ENCODE measurements at regions of chr17 and their contacts with region 1.

Region 1: DNA sequence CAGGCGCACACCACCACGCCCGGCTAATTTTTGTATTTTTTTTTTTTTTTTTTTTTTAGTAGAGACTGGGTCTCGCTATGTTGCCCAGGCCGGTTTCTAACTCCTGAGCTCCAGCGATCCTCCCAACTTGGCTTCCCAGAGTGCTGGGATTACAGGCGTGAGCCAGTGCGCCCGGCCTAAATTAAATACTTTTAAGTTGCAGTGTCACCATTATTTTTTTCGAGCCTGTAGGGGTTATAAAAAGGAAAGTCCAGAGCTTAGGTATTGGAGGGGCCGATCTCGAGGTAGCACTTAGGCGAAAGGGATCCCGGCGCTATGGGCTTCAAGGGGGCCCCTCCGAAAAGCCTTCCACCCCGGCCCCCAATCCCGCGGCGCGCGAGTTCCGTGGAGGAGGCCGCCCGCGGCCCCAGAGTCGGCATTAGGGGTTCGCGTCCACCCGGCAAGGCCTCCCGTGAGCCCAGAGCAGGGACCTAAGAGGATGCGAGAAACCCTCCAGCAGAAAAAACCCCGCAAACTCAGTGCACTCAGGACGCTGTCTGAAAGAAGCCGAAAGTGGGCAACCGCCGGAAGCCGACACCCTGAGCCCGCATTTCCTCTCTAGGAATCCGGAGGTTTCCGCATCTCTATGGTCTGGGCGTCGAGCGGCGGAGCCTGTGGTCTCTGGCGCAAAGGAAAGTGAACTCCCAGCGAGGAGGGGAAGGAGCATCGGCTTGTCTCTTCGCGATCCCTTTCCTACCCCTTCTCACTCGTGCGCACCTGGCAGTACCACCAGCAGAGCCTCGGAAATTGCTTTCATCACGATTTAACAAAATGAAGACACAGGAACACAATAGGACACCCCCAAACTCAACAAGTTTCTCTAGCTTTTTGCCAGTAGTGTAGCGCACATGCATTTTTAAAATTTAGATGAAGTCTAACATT is 14.1 kb upstream of the RGS9 start:
- DNase-seq: peak; percentile 57 to 84 (median 80)
- H3K4me3 ChIP-seq: peak overlapping the region; percentile 47 to 85 (median 70)
- H3K27ac ChIP-seq: peak overlapping the region; percentile 53 to 98 (median 88)
- H3K27me3 ChIP-seq: no peaks in the 10 kb centered on the region
- CTCF ChIP-seq: peak in 22 of 56 donors; percentile 7 to 45 (median 27)

Region 2: DNA sequence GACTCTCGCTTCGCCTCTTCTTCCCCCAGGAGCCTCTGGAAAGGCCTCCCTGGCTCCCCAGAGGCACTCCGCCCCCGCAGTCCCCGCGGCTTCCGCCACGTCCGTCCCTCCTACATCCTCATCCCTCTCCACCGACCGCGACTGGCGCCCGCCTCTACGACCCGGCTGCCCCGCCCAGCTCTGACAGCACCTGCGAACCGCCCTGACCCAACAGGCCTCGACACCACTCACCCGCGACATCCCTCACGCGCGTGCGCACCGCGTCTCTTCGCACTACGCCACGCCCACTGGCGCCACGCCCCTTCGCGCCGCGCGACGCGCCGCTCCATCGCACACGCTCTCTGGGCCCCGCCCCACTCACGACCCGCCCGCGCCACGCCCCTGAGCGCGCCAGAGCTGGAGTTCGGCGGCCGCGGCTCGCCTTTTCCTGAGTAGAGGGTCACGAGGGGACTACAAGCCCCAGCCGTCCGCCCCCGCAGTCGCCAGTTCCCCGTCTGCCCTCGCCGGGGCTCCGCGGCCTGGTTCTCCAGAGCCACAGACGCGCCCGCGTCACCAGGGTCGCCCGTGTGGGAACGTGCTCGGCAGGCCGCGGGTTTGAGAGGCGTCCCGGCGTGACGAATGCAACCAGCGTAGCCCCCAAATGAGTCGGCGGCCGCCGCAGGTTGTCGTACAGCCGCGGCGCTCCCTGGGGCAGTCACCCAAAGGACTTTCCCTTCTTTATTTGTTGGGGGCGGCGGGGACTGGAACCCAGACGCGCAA is 147.6 kb before region 1 on chr17:
- intact Hi-C with region 1: loop called in 1 of 2 experiments (anchors 5 kb)
- DNase-seq: peak; percentile 88 to 96 (median 92)
- H3K4me3 ChIP-seq: peak overlapping the region; percentile 65 to 98 (median 87)
- H3K27ac ChIP-seq: peak overlapping the region; percentile 77 to 99 (median 97)
- H3K27me3 ChIP-seq: no peaks in the 10 kb centered on the region
- CTCF ChIP-seq: peak in 25 of 56 donors; percentile 4 to 59 (median 24)

Region 3: GRCh38 chr17:65137021-65137991 is 14.2 kb after region 1 on chr17 and contains the start of gene RGS9:
- intact Hi-C with region 1: loop called in 1 of 2 experiments (anchors 2 kb)
- DNase-seq: peak; percentile 75 to 90 (median 82)
- H3K4me3 ChIP-seq: peak within 1 kb of the TSS; percentile 33 to 72 (median 61)
- H3K27ac ChIP-seq: peak within 1 kb of the TSS in 7 of 59 donors; percentile 3 to 62 (median 56)
- H3K27me3 ChIP-seq: peaks cover 0 to 8% (median 0%) of the 10 kb centered on the region in 45 donors
- CTCF ChIP-seq: peak; percentile 73 to 98 (median 92)
- total RNA-seq, gene RGS9: 4.3 to 19.6 (median 10.5) TPM